ENCODE measurements at regions of chr7 and their contacts with region 1.

Region 1: DNA sequence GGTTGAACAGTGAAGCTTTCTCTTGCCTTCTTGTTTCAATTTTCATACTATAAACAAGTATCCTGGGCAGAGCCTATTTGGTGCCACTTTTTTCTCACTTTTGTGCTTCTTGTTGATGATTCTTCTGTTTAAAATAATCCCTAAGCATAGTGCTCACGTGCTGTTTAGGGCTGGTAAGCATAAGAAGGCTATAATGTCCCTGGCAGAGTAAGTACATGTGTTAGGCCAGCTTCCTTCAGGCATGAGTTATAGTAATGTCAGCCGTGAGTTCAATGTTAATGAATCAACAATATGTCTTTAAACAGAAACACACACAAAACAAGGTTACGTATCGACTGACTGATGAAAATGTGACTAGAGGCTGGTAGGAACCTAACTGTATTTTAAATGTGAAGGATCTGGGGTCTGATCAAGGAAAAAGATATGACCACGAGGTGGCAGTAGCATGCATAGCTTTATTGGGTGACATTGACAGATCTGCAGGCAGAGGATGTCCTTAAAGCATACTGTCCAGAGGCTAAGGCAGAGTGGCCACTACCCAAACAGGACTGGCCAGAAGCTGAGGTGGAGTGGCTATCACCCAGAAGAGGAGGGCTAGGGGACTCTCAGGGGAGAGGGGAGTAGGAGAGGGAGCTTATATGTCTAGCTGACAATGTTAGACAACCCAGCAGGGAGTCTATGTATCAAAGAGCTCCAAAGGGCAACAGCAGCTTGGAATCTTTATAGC is 113.7 kb downstream of the BRAF start:
- DNase-seq: peak; percentile 43
- CTCF ChIP-seq: peak; percentile 74

Region 2: DNA sequence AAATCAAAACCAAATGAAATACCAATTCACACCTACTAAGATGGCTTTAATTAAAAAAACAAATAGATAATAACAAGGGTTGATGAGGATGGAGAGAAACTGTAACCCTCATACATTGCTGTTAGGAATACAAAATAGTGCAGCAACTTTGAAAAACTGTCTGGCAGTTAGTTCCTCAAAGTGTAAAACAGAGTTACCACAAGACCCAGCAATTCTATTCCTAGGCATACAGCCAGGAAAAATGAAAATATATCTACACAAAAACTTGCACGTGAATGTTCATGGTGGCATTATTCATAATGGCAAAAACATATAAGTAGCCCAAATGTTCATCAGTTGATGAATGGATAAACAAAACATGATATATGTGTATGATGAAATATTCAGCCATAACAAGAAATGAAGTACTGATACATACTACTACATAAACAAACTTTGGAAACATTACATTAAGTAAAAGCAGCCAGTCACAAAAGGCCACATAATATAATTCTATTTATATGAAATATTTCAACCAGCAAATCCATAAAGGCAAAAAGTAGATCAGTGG is 30.2 kb after region 1 on chr7:
- CTCF ChIA-PET with region 1: interaction called, 14 read pairs
- POLR2A ChIA-PET with region 1: no interaction called
- DNase-seq: no peak
- CTCF ChIP-seq: no peak

Region 3: GRCh38 chr7:140924019-140924820 is 113.2 kb after region 1 on chr7:
- CTCF ChIA-PET with region 1: interaction called, 13 read pairs
- POLR2A ChIA-PET with region 1: no interaction called
- DNase-seq: peak; percentile 80
- CTCF ChIP-seq: peak; percentile 45

Region 4: GRCh38 chr7:140990193-140990962 is 179.4 kb after region 1 on chr7:
- CTCF ChIA-PET with region 1: interaction called, 10 read pairs
- POLR2A ChIA-PET with region 1: no interaction called
- DNase-seq: no peak
- CTCF ChIP-seq: no peak

Region 5: GRCh38 chr7:141014524-141015395 is 203.8 kb after region 1 on chr7 and contains the start of gene MRPS33:
- CTCF ChIA-PET with region 1: interaction called, 118 read pairs
- POLR2A ChIA-PET with region 1: no interaction called
- DNase-seq: peak; percentile 95
- CTCF ChIP-seq: peak; percentile 89

Region 6: DNA sequence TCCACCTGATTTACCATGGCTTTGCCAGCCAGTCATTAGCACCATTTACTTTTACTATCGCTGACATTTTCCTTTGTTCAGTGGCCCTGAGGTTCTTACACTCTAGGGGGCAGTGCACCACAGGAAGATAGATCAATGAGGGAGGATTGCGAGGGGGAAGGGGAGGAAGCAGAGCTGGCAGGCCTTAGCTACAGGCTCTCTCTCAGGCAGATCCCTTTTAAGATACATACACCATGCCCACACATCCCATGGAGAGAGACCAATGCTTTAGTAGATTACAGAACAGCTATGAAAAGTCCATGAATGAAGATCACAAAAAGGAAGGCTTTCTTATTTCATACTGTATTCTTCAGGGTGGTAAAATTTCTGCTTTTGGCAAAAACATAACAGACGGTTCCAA is 843.6 kb after region 1 on chr7:
- CTCF ChIA-PET with region 1: interaction called, 13 read pairs
- POLR2A ChIA-PET with region 1: no interaction called
- DNase-seq: peak; percentile 62
- CTCF ChIP-seq: peak; percentile 80